Activated naive CD4-positive, alpha-beta T cell treated with anti-CD3 and anti-CD28 coated beads, Interleukin-2, amount 10 ng/mL, durations not matched to agents 7 days and 5 days (primary cell): ENCODE measurements at regions of chr4 and their contacts with region 1.

Region 1: DNA sequence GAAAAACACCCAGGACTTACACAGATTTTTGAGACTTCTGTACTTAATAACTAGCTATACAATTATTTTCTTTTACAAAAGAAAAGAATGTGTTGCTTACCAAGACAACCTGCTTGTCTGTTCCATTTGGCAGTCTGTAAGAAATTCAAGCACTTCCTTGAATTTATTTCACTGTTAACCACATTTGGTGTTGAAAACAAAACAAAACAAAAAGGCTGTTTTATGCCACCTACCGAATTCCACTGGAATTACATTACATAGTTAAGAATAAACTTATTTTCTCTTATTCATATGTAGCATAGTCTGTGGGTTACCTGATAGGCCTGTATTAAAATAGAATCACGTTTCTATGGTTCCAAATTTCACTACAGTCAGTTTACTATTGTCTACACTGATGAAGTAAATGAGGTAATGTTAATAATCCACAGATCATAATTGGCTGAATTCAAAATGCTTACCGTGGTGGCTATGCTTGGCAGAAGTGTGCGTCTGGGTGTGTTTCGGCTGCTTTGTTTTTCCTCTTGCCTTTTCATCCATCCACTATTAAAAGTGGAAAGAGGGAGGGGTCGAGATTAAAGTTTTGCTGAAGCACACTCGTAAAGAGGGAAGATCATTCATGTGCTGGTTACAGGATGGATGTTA is at the start of gene TLR1:
- DNase-seq: peak; percentile 38
- H3K4me3 Mint-ChIP-seq: peak within 1 kb of the TSS; percentile 86
- H3K27ac Mint-ChIP-seq: peak within 1 kb of the TSS; percentile 99
- H3K4me1 Mint-ChIP-seq: peaks cover 46% of the 10 kb centered on the region
- H3K27me3 Mint-ChIP-seq: no peaks in the 10 kb centered on the region

Region 2: GRCh38 chr4:38343608-38344007 is 461.2 kb before region 1 on chr4:
- CTCF ChIA-PET with region 1: no interaction called
- DNase-seq: no peak
- H3K4me3 Mint-ChIP-seq: no peak overlapping the region
- H3K27ac Mint-ChIP-seq: no peak overlapping the region
- H3K4me1 Mint-ChIP-seq: no peaks in the 10 kb centered on the region
- H3K27me3 Mint-ChIP-seq: peaks cover 4% of the 10 kb centered on the region

Region 3: DNA sequence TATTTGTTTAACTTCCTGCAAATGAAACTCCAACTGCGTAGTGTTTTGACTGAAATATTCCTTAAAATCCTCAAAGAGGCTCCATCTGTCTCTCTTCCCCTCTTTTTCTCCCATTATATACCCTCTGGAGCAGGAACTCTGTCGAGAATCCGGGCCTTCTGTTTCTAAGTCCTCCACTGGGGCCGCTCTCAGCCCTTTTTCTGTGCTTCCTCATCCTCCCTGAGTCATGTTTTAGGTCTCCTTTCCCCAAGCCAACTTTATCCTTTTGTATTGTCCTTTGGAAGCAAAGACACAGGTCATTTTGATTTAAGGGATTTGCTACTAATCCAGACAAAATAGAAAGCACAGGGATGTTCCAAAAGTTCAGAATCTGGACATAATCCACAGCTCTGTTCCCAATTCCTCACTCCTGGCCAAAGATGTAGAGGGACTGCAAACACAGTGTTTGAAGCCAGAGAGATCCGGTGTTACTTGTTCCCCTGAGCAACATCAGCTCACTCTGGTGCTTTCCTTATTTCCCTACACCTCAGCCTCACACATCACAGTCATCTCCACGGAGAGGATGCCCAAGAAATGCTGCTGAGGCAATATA is 271.8 kb before region 1 on chr4:
- CTCF ChIA-PET with region 1: no interaction called
- DNase-seq: no peak
- H3K4me3 Mint-ChIP-seq: no peak overlapping the region
- H3K27ac Mint-ChIP-seq: no peak overlapping the region
- H3K4me1 Mint-ChIP-seq: peaks cover 28% of the 10 kb centered on the region
- H3K27me3 Mint-ChIP-seq: peaks cover 15% of the 10 kb centered on the region

Region 4: DNA sequence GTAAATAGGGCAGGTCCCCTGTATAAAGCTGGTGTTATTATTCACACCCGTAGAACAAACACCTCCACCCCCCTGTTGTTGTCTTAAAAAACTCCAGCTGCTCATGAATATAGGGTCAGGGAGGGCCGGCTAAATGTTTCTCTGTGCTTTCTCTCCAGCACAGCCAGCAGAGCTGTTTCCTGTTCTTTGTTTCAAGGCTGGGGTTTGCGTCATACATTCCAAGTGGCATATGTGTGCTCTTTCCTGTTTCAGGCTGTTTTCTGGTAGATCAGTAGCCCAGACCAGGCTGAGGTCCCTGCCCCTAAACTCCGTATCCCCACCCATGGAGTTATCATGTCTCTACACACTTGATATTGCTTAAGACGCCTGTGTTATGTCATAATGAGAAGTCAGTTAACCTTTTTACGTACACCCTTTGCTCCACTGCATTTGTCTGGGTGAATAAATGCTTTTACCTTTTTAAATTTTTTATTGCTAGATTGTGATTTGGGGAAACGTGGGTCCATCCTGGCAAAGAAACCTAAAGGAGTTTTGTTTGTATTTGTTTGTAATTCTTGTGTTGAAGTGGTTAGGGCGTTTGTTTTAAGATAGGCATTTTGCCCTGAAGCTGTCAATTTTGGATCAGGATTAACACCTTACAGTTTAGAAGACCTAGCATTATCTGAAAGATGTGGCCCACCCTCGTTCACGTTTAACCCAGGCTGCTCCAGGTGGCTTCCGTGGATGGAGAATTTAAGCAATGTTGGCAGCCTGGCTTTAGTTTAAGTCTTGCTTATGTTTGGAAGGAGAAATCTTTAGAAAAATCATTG is 137.5 kb before region 1 on chr4:
- CTCF ChIA-PET with region 1: no interaction called
- DNase-seq: peak; percentile 76
- H3K4me3 Mint-ChIP-seq: peak overlapping the region; percentile 93
- H3K27ac Mint-ChIP-seq: peak overlapping the region; percentile 91
- H3K4me1 Mint-ChIP-seq: peaks cover 70% of the 10 kb centered on the region
- H3K27me3 Mint-ChIP-seq: no peaks in the 10 kb centered on the region

Region 5: DNA sequence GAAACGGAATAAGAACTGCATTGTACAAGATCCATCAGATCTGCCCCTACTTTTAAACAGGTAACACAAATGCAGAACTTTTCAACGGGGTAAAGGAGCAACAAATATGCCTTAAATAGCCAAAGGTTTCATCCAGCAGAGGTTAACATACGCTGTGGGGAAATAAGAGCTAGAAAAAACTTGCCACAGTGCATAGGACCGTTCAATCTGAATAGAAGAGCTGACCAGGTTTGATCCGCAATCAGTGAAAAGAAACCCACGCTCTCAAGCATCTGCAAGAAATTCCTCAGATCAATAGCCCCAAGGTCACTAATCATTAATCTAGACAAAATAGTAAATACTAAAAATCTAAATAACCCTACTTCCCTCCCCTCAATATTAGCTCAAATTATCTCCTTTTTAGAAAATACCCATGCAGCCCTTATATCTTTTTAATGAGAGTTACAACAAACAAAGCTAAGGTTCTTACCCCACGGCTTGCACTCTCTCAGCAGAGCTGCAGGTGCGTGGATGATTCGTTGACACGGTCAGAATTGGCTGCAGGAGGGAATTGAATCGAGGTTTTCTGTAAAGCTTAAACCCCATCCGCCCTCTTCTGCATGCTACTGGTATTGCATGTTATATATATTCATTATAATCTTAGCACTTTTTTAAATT is 22.2 kb before region 1 on chr4 and contains the start of gene TLR10:
- CTCF ChIA-PET with region 1: interaction called, 70 read pairs
- DNase-seq: peak; percentile 49
- H3K4me3 Mint-ChIP-seq: no peak within 1 kb of the TSS
- H3K27ac Mint-ChIP-seq: no peak within 1 kb of the TSS
- H3K4me1 Mint-ChIP-seq: peaks cover 8% of the 10 kb centered on the region
- H3K27me3 Mint-ChIP-seq: no peaks in the 10 kb centered on the region

Region 6: GRCh38 chr4:38788327-38788726 is 16.4 kb before region 1 on chr4:
- CTCF ChIA-PET with region 1: interaction called, 70 read pairs
- DNase-seq: no peak
- H3K4me3 Mint-ChIP-seq: no peak overlapping the region
- H3K27ac Mint-ChIP-seq: no peak overlapping the region
- H3K4me1 Mint-ChIP-seq: peaks cover 19% of the 10 kb centered on the region
- H3K27me3 Mint-ChIP-seq: no peaks in the 10 kb centered on the region

Region 7: GRCh38 chr4:38818441-38818976 is 13.7 kb after region 1 on chr4:
- CTCF ChIA-PET with region 1: interaction called, 10 read pairs
- DNase-seq: no peak
- H3K4me3 Mint-ChIP-seq: no peak overlapping the region
- H3K27ac Mint-ChIP-seq: no peak overlapping the region
- H3K4me1 Mint-ChIP-seq: peaks cover 21% of the 10 kb centered on the region
- H3K27me3 Mint-ChIP-seq: peaks cover 7% of the 10 kb centered on the region

Region 8: DNA sequence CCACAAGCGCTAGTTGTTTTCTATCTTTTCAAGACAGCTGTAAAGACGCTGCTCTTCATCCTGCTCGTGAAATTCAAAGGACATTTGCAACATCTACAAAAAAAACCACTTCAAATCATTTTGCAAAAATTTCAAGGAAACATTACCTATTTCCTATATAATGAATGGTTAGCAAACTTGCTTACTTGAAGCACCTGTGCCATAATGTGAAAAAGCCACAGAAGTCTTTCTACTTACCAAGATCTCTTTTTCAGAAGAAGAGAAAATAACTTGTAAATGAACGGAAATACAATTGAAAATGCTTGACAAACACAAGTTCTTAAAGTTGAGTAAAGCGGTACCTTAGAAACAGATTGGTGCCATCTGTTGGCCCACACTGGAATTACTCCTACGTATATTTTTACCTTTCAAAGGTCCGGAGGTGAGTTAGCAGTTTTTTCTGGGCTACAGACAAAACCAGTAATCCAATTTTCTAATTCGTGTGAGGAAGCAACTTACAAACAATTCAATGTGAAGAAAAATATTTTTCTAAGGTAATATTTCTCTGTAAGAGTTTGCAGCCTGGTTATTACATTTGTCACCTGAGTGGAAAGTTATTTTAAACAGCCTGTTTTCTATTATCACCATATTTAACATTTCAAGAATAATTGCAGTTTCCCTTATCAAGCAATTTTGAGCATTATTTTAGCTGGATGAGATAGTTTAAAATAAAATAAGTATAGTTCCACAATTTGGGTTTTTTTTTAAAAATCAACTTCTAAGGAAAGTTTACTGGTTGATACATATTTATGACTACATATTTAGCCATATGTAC is 52.0 kb after region 1 on chr4 and contains the start of gene TLR6:
- CTCF ChIA-PET with region 1: interaction called, 17 read pairs
- DNase-seq: peak; percentile 82
- H3K4me3 Mint-ChIP-seq: peak within 1 kb of the TSS; percentile 71
- H3K27ac Mint-ChIP-seq: peak within 1 kb of the TSS; percentile 98
- H3K4me1 Mint-ChIP-seq: peaks cover 57% of the 10 kb centered on the region
- H3K27me3 Mint-ChIP-seq: peaks cover 8% of the 10 kb centered on the region